ENCODE measurements at regions of chr1 and their contacts with region 1.

Region 1: DNA sequence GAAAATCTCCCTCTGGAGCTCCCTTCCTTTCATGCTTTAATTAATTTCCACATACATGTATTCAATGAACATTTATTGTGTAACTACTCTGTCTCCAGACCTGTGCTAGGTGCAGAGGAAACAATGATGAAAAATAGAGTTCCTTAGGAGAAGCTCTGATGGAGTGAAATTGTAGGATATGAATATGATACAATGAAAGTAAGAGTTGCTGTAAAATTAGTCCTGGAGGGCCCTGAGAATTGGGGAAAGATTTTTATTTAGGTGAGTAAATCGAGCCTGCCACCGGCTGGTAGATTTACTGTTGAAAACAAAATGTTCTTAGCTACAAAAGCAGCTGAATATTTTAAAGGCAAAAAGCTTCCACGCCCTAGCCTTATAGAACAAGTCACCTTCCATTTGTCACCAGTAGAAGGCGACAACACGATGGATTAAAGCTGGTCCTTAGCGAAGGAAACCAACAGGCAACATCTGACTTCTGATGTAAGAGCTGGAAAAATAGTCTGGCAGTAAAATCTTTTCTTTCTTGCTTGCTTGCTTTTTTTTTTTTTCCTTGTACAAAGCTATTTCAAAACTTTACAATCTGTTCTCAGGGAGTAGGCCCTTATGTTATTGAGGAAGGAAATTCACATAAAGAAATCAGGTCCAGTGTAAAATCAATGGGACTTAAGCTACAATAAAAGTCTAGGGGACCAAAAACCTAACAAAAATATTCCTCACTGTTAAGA is 82.0 kb upstream of the ROR1 start:
- DNase-seq: peak in 4 of 5 donors; percentile 10 to 17 (median 12)
- H3K4me3 ChIP-seq: no peak overlapping the region
- H3K4me3 Mint-ChIP-seq: no peak overlapping the region
- H3K27ac ChIP-seq: no peak overlapping the region
- H3K27ac Mint-ChIP-seq: no peak overlapping the region
- H3K4me1 ChIP-seq: no peaks in the 10 kb centered on the region
- H3K4me1 Mint-ChIP-seq: peaks cover 0 to 2% (median under 1%) of the 10 kb centered on the region in 4 donors
- H3K27me3 ChIP-seq: no peaks in the 10 kb centered on the region
- H3K27me3 Mint-ChIP-seq: no peaks in the 10 kb centered on the region

Region 2: GRCh38 chr1:63615768-63616420 is 76.0 kb before region 1 on chr1:
- CTCF ChIA-PET with region 1: interaction called, 11 read pairs
- POLR2A ChIA-PET with region 1: no interaction called
- intact Hi-C with region 1: loop called (anchors 5 kb)
- DNase-seq: peak; percentile 49 to 76 (median 67)
- H3K4me3 ChIP-seq: no peak overlapping the region
- H3K4me3 Mint-ChIP-seq: no peak overlapping the region
- H3K27ac ChIP-seq: no peak overlapping the region
- H3K27ac Mint-ChIP-seq: peak overlapping the region in 1 of 7 donors; percentile 58
- H3K4me1 ChIP-seq: no peaks in the 10 kb centered on the region
- H3K4me1 Mint-ChIP-seq: peaks cover 0 to 10% (median 2%) of the 10 kb centered on the region in 4 donors
- H3K27me3 ChIP-seq: no peaks in the 10 kb centered on the region
- H3K27me3 Mint-ChIP-seq: no peaks in the 10 kb centered on the region

Region 3: DNA sequence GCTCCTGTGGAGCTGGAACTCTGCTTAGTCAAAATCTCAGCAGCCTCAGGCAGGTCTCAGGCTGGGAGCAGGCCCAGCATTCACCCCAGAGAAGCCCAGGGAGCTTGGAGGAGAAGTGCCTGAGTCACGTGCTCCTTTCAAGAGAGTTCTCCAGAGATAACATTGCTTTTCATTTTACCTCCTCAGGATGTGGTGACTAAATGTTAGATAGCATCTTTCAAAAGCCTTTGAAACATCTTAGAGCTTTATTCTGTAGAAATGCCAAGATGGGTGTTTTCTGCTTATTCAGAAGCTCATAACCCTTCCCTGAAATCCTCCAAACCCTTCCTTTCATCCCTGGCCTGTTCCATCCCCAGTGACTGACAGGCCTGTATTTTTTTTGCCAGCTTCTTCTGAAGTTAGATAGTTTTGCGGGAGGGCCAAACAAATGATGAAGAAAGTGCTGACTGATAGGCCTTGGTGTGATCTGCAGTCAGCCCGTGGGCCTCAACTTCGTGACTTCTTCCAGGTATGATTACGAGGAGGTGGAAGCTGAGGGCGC is 40.6 kb before region 1 on chr1:
- CTCF ChIA-PET with region 1: interaction called, 33 read pairs
- POLR2A ChIA-PET with region 1: interaction called, 8 read pairs
- intact Hi-C with region 1: no loop called
- DNase-seq: peak; percentile 52 to 63 (median 57)
- H3K4me3 ChIP-seq: peak overlapping the region in 1 of 2 donors; percentile 7
- H3K4me3 Mint-ChIP-seq: peak overlapping the region; percentile 16 to 91 (median 80)
- H3K27ac ChIP-seq: peak overlapping the region; percentile 31
- H3K27ac Mint-ChIP-seq: peak overlapping the region; percentile 90 to 97 (median 96)
- H3K4me1 ChIP-seq: peaks cover 39% of the 10 kb centered on the region
- H3K4me1 Mint-ChIP-seq: peaks cover 13 to 44% (median 31%) of the 10 kb centered on the region in 4 donors
- H3K27me3 ChIP-seq: no peaks in the 10 kb centered on the region
- H3K27me3 Mint-ChIP-seq: no peaks in the 10 kb centered on the region

Region 4: DNA sequence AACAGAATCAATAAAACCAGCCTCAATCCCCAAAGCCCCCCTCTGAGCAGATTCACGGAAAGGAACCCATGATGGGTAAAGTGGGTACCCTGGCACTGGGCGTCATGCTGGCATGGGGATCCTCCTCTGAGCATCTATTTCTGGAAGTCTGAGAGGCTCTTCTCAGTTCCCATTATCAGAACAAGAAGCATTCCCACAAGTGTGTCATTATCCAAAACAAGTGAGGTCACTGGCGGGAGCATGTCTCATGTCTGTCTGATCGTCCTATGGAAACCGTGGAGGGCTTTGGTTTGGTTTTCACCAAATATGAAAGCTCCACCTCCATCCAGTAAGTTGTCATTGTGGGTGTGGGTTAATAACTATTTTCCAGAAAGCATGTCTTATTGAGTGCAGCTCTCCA is 28.0 kb before region 1 on chr1:
- CTCF ChIA-PET with region 1: interaction called, 10 read pairs
- POLR2A ChIA-PET with region 1: no interaction called
- intact Hi-C with region 1: no loop called
- DNase-seq: no peak
- H3K4me3 ChIP-seq: no peak overlapping the region
- H3K4me3 Mint-ChIP-seq: no peak overlapping the region
- H3K27ac ChIP-seq: no peak overlapping the region
- H3K27ac Mint-ChIP-seq: no peak overlapping the region
- H3K4me1 ChIP-seq: no peaks in the 10 kb centered on the region
- H3K4me1 Mint-ChIP-seq: peaks cover 1 to 13% (median 9%) of the 10 kb centered on the region in 4 donors
- H3K27me3 ChIP-seq: no peaks in the 10 kb centered on the region
- H3K27me3 Mint-ChIP-seq: no peaks in the 10 kb centered on the region

Measured in CD4-positive, alpha-beta memory T cell (primary cell).